IMR-90 (cell line): ENCODE measurements at regions of chr12 and their contacts with region 1.

Region 1: DNA sequence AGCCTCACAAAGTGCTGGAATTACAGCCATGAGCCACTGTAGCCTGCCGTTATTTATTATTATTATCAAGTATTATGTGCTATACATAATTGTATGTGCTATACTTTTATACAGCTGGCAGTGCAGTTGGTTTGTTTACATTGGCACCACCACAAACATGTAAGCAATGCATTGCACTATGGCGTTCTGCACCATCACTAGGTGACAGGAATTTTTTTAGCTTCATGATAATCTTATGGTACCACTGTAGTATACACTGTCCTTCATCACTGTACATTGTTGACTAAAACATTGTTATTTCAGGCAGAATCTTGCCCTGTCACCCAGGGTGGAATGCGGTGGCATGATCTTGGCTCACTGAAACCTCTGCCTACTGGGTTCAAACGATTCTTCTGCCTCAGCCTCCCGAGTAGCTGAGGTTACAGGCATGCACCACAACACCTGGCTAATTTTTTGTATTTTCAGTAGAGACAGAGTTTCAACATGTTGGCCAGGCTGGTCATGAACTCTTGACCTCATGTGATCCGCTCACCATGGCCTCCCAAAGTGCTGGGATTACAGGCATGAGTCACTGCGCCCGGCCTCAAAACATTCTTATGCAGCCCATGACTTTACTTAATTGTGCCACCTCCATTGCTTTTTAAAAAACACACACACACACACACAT is 17.1 kb downstream of the MRPL42 start:
- DNase-seq: peak; percentile 33
- ATAC-seq: peak; percentile 80
- H3K4me3 ChIP-seq: no peak overlapping the region
- H3K27ac ChIP-seq: 0 out of 2 replicates have a peak overlapping the region, but pooled peaks have one; percentile 57
- H3K4me1 ChIP-seq: peaks cover 10% of the 10 kb centered on the region
- H3K27me3 ChIP-seq: no peaks in the 10 kb centered on the region
- CTCF ChIP-seq: no peak
- POLR2A ChIP-seq: no peak
- RAD21 ChIP-seq: no peak

Region 2: DNA sequence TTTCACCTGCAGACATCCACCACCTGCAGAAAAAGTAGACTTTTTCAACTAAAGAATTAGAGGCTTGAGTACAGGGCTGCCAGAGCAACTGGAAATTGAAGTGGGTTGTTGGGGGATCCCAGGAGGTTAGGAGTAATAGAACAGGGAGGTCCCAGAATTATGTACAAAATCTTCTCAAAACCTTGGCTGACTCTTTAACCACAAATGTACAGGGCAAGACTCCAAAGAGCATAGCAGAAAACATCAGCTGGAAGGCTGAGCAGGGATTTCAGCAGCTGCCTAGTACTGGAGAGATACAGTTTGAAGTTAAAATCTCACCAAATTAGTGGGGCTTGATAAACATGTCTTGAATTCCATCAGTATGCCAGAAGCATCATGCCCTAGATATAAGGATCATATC is 384.3 kb after region 1 on chr12:
- CTCF ChIA-PET with region 1: no interaction called
- POLR2A ChIA-PET with region 1: no interaction called
- dilution Hi-C with region 1: no loop called
- in situ Hi-C with region 1: no loop called
- intact Hi-C with region 1: no loop called
- DNase-seq: peak; percentile 52
- ATAC-seq: peak; percentile 17; the same call in 1 of the 2 replicates
- H3K4me3 ChIP-seq: no peak overlapping the region
- H3K27ac ChIP-seq: no peak overlapping the region
- H3K4me1 ChIP-seq: 0 out of 2 replicates have a peak, but pooled peaks cover 2% of the 10 kb centered on the region
- H3K27me3 ChIP-seq: no peaks in the 10 kb centered on the region
- CTCF ChIP-seq: no peak
- POLR2A ChIP-seq: no peak
- RAD21 ChIP-seq: no peak

Region 3: DNA sequence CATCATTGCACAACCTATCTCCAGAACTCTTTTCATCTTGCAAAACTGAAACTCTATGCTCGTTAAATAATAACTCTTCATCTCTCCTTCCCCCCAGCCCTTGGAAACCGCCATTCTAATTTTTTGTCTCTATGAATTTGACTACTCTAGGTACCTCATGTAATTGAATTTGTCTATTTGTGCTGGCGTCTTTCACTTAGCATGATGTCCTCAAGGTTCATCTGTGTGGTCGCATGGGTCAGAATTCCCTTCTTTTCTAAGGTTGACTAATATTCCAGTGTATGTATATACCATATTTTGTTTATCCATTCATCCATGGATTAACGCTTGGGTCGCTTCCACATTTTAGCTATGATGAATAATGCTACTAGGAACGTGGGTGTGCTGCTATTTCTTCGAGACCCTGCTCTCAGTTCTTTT is 744.0 kb after region 1 on chr12:
- CTCF ChIA-PET with region 1: no interaction called
- POLR2A ChIA-PET with region 1: no interaction called
- dilution Hi-C with region 1: no loop called
- in situ Hi-C with region 1: no loop called
- intact Hi-C with region 1: loop called (anchors 5 kb)
- DNase-seq: no peak
- ATAC-seq: no peak
- H3K4me3 ChIP-seq: no peak overlapping the region
- H3K27ac ChIP-seq: no peak overlapping the region
- H3K4me1 ChIP-seq: peaks cover 5% of the 10 kb centered on the region; the same call in 1 of the 2 replicates
- H3K27me3 ChIP-seq: peaks cover 51% of the 10 kb centered on the region
- CTCF ChIP-seq: no peak
- POLR2A ChIP-seq: no peak
- RAD21 ChIP-seq: no peak